Common myeloid progenitor, CD34-positive (primary cell): ENCODE measurements at regions of chr1 and their contacts with region 1.

Region 1: GRCh38 chr1:84164567-84165021 is 20.5 kb downstream of the PRKACB start:
- DNase-seq: no peak
- H3K4me3 ChIP-seq: peak overlapping the region in 1 of 7 experiments; percentile 14
- H3K27ac ChIP-seq: peak overlapping the region in 1 of 2 experiments; percentile 15
- H3K4me1 ChIP-seq: peaks cover 3 to 34% (median 18%) of the 10 kb centered on the region in 4 experiments
- H3K27me3 ChIP-seq: no peaks in the 10 kb centered on the region

Region 2: GRCh38 chr1:84152649-84153056 is 11.9 kb before region 1 on chr1:
- CTCF ChIA-PET with region 1: interaction called, 15 read pairs
- POLR2A ChIA-PET with region 1: interaction called, 4 read pairs
- DNase-seq: peak in 1 of 3 donors; percentile 21
- H3K4me3 ChIP-seq: peak overlapping the region in 1 of 7 experiments; percentile 7
- H3K27ac ChIP-seq: no peak overlapping the region
- H3K4me1 ChIP-seq: peaks cover 19 to 56% (median 22%) of the 10 kb centered on the region in 4 experiments
- H3K27me3 ChIP-seq: no peaks in the 10 kb centered on the region

Region 3: DNA sequence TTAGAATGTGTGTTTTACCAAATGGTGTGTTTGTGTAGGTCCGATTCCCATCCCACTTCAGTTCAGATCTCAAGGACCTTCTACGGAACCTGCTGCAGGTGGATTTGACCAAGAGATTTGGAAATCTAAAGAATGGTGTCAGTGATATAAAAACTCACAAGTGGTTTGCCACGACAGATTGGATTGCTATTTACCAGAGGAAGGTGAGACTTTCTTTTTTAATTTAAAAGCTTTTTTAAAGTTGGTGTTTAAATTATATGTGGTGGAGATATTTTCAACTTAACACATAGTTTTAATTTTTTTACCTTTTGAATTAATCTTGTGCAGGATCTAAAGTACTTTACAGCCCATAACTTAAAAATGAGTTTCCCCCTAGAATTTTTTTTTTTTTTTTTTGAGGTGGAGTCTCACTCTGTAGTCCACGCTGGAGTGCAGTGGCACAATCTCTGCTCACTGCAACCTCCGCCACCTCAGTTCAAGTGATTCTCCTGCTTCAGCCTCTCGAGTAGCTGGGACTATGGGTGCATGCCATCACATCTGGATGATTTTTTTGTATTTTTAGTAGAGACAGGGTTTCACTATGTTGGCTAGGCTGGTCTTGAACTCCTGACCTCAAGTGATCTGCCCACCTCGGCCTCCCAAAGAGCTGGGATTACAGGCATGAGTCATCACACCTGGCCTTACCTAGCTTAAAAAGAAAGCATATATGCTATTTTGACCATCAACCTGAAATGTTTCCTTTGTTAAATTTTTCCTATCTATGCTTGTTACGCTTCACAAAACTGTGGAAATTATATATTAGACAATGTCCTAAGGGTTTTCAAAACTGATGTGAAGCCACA is 49.7 kb after region 1 on chr1:
- CTCF ChIA-PET with region 1: no interaction called
- POLR2A ChIA-PET with region 1: no interaction called
- DNase-seq: no peak
- H3K4me3 ChIP-seq: no peak overlapping the region
- H3K27ac ChIP-seq: no peak overlapping the region
- H3K4me1 ChIP-seq: peaks cover 0 to 15% (median 2%) of the 10 kb centered on the region in 4 experiments
- H3K27me3 ChIP-seq: no peaks in the 10 kb centered on the region